ENCODE measurements at regions of chr18 and their contacts with region 1.

Region 1: GRCh38 chr18:30280880-30281470 is 761.6 kb downstream of the DSC3 start:
- DNase-seq: no peak
- ATAC-seq: no peak; the same call in 1 of the 2 replicates
- H3K4me3 Mint-ChIP-seq: no peak overlapping the region
- H3K27ac Mint-ChIP-seq: peak overlapping the region; percentile 7
- H3K4me1 Mint-ChIP-seq: peaks cover 11% of the 10 kb centered on the region
- H3K27me3 Mint-ChIP-seq: no peaks in the 10 kb centered on the region
- CTCF ChIP-seq: peak; percentile 72

Region 2: GRCh38 chr18:29874519-29875098 is 406.4 kb before region 1 on chr18:
- CTCF ChIA-PET with region 1: interaction called, 27 read pairs
- POLR2A ChIA-PET with region 1: no interaction called
- DNase-seq: peak; percentile 14
- ATAC-seq: peak; percentile 60
- H3K4me3 Mint-ChIP-seq: no peak overlapping the region
- H3K27ac Mint-ChIP-seq: no peak overlapping the region
- H3K4me1 Mint-ChIP-seq: peaks cover 8% of the 10 kb centered on the region
- H3K27me3 Mint-ChIP-seq: peaks cover 10% of the 10 kb centered on the region
- CTCF ChIP-seq: peak; percentile 66

Region 3: GRCh38 chr18:30265190-30265589 is 15.8 kb before region 1 on chr18:
- CTCF ChIA-PET with region 1: interaction called, 12 read pairs
- POLR2A ChIA-PET with region 1: no interaction called
- DNase-seq: no peak
- ATAC-seq: no peak
- H3K4me3 Mint-ChIP-seq: no peak overlapping the region
- H3K27ac Mint-ChIP-seq: no peak overlapping the region
- H3K4me1 Mint-ChIP-seq: no peaks in the 10 kb centered on the region
- H3K27me3 Mint-ChIP-seq: no peaks in the 10 kb centered on the region
- CTCF ChIP-seq: no peak

Region 4: DNA sequence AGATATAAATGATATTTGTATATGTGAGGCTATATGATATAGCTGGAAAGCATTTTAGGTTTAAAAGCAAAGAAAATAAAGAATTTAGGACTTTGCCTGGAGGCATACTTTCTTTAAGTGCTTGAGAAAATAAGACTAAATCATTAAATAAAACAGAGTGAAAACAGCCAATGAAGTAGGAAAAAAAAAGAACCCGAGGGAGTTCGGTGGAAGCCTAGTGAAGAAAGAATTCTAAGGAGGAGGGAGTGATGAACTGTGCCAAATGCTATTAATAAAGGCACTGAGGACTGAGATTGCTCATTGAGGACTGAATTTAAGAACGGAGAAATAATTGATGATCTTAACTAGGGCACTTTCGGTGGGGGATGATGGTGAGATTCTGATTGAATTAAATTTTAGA is 188.1 kb after region 1 on chr18:
- CTCF ChIA-PET with region 1: no interaction called
- POLR2A ChIA-PET with region 1: no interaction called
- DNase-seq: no peak
- ATAC-seq: no peak
- H3K4me3 Mint-ChIP-seq: no peak overlapping the region
- H3K27ac Mint-ChIP-seq: no peak overlapping the region
- H3K4me1 Mint-ChIP-seq: no peaks in the 10 kb centered on the region
- H3K27me3 Mint-ChIP-seq: no peaks in the 10 kb centered on the region
- CTCF ChIP-seq: no peak

Region 5: GRCh38 chr18:30889519-30890301 is 608.7 kb after region 1 on chr18:
- CTCF ChIA-PET with region 1: interaction called, 13 read pairs
- POLR2A ChIA-PET with region 1: no interaction called
- DNase-seq: peak; percentile 14
- ATAC-seq: peak; percentile 81
- H3K4me3 Mint-ChIP-seq: no peak overlapping the region
- H3K27ac Mint-ChIP-seq: no peak overlapping the region
- H3K4me1 Mint-ChIP-seq: peaks cover 41% of the 10 kb centered on the region
- H3K27me3 Mint-ChIP-seq: peaks cover 8% of the 10 kb centered on the region; the same call in 1 of the 2 replicates
- CTCF ChIP-seq: no peak

Measured in WTC11 (cell line).